Left lung (tissue), 14 donors: ENCODE measurements at regions of chrX and their contacts with region 1.

Region 1: DNA sequence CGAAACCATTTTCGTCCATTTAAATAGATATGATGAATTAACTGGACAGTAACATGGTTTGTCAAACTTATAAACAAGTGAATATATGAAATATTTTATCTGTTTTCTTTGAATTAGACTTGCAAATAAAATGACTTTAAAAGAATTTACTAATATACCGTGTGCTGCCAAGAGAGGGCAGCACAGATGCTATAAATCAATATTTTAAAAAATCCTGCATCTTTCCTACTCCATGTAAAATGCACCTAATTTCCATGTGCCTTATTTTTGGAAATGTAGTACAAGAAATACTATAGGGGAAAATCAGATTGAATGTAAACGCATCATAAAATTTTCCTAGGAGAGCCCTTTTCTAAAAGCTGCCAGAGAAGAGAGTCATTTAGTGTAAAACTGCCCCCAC is 62.2 kb downstream of the PRKX start:
- DNase-seq: peak in 2 of 4 donors; percentile 19 to 24
- ATAC-seq: peak; percentile 59
- H3K4me3 ChIP-seq: no peak overlapping the region
- H3K27ac ChIP-seq: no peak overlapping the region
- H3K4me1 ChIP-seq: no peaks in the 10 kb centered on the region
- H3K27me3 ChIP-seq: no peaks in the 10 kb centered on the region
- CTCF ChIP-seq: peak in 1 of 2 donors; percentile 37

Region 2: DNA sequence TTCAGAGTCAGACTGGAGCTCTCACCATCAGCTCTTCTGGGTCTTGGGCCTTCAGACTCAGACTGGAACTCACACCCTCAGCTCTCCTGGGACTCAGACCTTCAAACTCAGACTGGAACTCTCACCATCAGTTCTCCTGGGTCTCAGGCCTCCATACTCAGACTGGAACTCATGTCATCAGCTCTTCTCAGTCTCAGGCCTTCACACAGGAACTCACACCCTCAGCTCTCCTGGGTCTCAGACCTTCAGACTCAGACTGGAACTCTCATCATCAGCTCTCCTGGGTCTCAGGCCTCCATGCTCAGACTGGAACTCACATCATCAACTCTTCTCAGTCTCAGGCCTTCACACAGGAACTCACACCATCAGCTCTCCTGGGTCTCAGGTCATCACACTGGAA is 157.7 kb before region 1 on chrX:
- intact Hi-C with region 1: no loop called
- DNase-seq: no peak
- ATAC-seq: no peak
- H3K4me3 ChIP-seq: no peak overlapping the region
- H3K27ac ChIP-seq: no peak overlapping the region
- H3K4me1 ChIP-seq: no peaks in the 10 kb centered on the region
- H3K27me3 ChIP-seq: no peaks in the 10 kb centered on the region
- CTCF ChIP-seq: no peak

Region 3: DNA sequence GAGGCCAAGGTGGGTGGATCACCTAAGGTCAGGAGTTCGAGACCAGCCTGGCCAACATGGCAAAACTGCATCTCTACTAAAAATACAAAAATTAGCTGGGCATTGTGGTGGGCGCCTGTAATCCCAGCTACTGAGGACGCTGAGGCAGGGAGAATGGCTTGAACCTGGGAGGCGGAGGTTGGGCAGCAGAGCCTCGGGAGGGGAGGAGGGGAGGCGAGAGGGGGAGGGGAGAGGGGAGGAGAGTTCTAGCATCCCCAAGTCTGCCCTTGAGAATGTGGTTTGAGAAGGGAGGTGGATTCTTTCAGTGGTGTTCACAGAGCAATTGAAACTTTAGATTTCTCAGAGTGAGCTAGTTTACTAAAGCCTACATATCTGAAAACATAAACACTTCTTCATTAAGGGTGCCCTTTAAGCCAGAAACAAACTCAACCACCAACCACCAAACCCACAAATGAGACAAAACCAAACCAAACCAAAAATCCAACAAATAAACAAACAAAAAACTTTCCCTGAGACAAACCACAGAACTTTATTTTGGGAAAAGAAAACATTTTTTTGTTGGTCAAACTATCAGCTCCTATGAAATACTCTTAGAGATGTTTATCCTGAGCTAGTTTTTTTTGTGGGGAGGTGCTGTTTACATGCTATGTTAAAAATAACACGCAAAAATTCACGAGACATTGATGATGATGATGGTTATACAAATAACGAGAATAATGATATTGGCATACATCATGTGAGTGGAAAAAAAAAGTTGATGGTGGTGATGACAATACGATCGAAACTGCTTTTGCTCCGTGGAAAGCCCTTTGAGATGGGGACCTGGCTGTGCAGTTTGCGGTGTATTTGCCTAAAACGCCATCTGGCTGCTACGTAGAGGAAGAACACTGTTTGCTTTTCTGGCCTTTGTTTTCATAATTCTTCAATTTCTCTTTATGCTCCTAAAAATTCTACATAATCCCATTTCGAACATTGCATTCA is 160.3 kb after region 1 on chrX:
- intact Hi-C with region 1: loop called in 1 of 2 experiments (anchors 5 kb)
- DNase-seq: peak in 2 of 4 donors; percentile 23 to 49
- ATAC-seq: no peak
- H3K4me3 ChIP-seq: no peak overlapping the region
- H3K27ac ChIP-seq: no peak overlapping the region
- H3K4me1 ChIP-seq: no peaks in the 10 kb centered on the region
- H3K27me3 ChIP-seq: peaks cover 7 to 15% of the 10 kb centered on the region in 2 donors
- CTCF ChIP-seq: peak; percentile 24 to 41

Region 4: GRCh38 chrX:4110964-4111363 is 459.7 kb after region 1 on chrX:
- intact Hi-C with region 1: no loop called
- DNase-seq: no peak
- ATAC-seq: no peak
- H3K4me3 ChIP-seq: no peak overlapping the region
- H3K27ac ChIP-seq: no peak overlapping the region
- H3K4me1 ChIP-seq: no peaks in the 10 kb centered on the region
- H3K27me3 ChIP-seq: no peaks in the 10 kb centered on the region
- CTCF ChIP-seq: no peak